ENCODE measurements at regions of chr3 and their contacts with region 1.

Region 1: GRCh38 chr3:50611464-50612233 is at the start of gene CISH:
- DNase-seq: no peak
- ATAC-seq: peak; percentile 88
- H3K4me3 ChIP-seq: peak within 1 kb of the TSS; percentile 85
- H3K27ac ChIP-seq: peak within 1 kb of the TSS; percentile 61
- H3K4me1 ChIP-seq: peaks cover 19% of the 10 kb centered on the region
- H3K27me3 ChIP-seq: no peaks in the 10 kb centered on the region
- CTCF ChIP-seq: peak; percentile 35 to 61 (median 52)
- EP300 ChIP-seq: no peak
- POLR2A ChIP-seq: peak; percentile 86
- RAD21 ChIP-seq: no peak
- polyA plus RNA-seq, gene CISH: 0.21 to 0.57 TPM

Region 2: DNA sequence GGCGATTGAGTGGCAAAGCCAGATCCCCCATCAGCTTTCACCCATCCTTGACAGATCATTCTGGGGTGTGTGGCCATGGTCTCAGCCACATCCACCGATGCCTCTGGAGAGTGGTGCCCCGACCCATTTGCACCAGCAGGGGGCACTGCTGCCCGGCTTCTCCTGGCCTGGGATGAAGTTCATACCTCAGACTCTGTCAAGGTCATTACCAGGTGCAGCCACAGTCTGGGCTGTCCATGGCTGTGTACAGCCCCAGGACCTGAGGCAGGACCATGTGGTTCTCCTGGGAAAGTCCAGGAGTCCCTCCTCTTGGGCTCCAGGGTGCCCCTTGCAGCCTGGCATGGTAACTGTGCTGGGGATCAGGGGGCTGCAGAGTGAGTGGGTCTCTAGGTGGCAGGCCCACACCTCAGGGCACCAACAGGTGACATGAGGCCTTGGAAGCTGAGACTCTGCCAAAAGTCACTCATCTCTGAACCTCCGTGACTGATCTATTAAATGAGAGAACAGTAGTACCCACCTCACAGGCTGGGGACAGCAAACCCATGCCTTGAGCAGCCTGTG is 175.5 kb before region 1 on chr3:
- CTCF ChIA-PET with region 1: no interaction called
- POLR2A ChIA-PET with region 1: no interaction called
- RAD21 ChIA-PET with region 1: no interaction called
- SMC1A ChIA-PET with region 1: no interaction called
- in situ Hi-C with region 1: no loop called
- intact Hi-C with region 1: loop called (anchors 1 kb)
- DNase-seq: no peak
- ATAC-seq: peak; percentile 94
- H3K4me3 ChIP-seq: no peak overlapping the region
- H3K27ac ChIP-seq: no peak overlapping the region
- H3K4me1 ChIP-seq: no peaks in the 10 kb centered on the region
- H3K27me3 ChIP-seq: no peaks in the 10 kb centered on the region; a peak in 2 of 4 replicates
- CTCF ChIP-seq: peak; percentile 62 to 84 (median 79)
- EP300 ChIP-seq: no peak
- POLR2A ChIP-seq: no peak
- RAD21 ChIP-seq: peak; percentile 64

Region 3: DNA sequence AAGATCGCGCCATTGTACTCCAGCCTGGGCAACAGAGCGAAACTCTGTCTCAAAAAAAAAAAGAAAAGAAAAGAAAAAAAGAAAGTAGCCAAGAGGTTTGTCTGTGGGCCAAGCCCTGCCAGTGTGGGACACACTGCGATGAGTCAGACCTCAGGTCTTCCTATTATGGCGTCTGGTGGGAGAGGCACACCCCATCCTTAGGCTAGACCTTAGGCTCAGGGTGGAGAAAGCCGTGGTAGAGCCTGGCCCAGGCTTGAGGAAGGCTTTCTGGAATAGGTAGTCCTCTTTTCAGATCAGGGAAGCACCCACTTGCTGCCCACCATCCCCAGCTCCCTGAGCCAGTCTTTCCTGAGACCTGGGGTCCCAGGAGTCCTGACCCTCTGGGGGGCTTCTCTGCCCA is 36.3 kb before region 1 on chr3:
- CTCF ChIA-PET with region 1: interaction called, 410 read pairs
- POLR2A ChIA-PET with region 1: interaction called, 23 read pairs
- RAD21 ChIA-PET with region 1: interaction called, 244 read pairs
- SMC1A ChIA-PET with region 1: interaction called, 137 read pairs
- in situ Hi-C with region 1: loop called (anchors 5 kb)
- intact Hi-C with region 1: loop called (anchors 1 kb)
- DNase-seq: no peak
- ATAC-seq: no peak
- H3K4me3 ChIP-seq: no peak overlapping the region
- H3K27ac ChIP-seq: no peak overlapping the region
- H3K4me1 ChIP-seq: peaks cover 4% of the 10 kb centered on the region
- H3K27me3 ChIP-seq: no peaks in the 10 kb centered on the region
- CTCF ChIP-seq: no peak
- EP300 ChIP-seq: no peak
- POLR2A ChIP-seq: no peak
- RAD21 ChIP-seq: no peak

Region 4: DNA sequence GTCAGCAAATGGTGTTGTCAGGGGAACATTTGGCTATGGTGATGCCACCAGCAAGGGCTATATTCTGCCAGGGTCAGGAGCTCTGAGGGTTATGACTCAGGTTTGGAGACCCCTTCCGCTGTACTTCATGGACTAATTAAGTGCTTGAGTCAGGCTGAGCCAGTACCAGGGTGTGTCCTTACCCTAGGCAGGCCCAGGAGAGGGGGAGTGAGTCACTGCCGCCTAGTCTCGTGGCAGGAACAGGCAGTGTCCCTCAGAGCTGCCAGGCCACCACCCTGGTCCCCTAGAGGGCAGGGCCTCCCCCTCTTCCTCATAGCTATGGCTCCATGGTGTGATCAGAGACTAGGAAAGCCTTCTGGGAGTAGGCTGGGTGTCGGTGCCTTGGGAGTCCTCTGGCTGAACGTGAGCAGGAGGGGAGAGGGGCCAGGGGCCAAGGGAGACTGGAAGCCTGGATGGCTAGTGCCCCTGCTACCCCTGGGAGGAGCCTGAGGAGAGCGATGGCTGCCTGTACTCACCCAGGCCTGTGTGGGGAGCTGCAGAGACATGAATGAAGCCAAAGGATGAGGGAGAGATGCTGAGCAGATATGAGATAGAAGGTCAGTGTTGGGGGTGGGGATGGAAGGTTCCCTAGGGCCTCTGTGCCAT is 15.9 kb after region 1 on chr3:
- CTCF ChIA-PET with region 1: interaction called, 35 read pairs
- POLR2A ChIA-PET with region 1: no interaction called
- RAD21 ChIA-PET with region 1: interaction called, 19 read pairs
- SMC1A ChIA-PET with region 1: interaction called, 26 read pairs
- in situ Hi-C with region 1: no loop called
- intact Hi-C with region 1: no loop called
- DNase-seq: no peak
- ATAC-seq: peak; percentile 55
- H3K4me3 ChIP-seq: no peak overlapping the region
- H3K27ac ChIP-seq: no peak overlapping the region
- H3K4me1 ChIP-seq: peaks cover 22% of the 10 kb centered on the region
- H3K27me3 ChIP-seq: no peaks in the 10 kb centered on the region
- CTCF ChIP-seq: peak; percentile 27 to 42 (median 37); a peak in 3 of 6 replicates
- EP300 ChIP-seq: no peak
- POLR2A ChIP-seq: no peak
- RAD21 ChIP-seq: peak; percentile 61

Region 5: DNA sequence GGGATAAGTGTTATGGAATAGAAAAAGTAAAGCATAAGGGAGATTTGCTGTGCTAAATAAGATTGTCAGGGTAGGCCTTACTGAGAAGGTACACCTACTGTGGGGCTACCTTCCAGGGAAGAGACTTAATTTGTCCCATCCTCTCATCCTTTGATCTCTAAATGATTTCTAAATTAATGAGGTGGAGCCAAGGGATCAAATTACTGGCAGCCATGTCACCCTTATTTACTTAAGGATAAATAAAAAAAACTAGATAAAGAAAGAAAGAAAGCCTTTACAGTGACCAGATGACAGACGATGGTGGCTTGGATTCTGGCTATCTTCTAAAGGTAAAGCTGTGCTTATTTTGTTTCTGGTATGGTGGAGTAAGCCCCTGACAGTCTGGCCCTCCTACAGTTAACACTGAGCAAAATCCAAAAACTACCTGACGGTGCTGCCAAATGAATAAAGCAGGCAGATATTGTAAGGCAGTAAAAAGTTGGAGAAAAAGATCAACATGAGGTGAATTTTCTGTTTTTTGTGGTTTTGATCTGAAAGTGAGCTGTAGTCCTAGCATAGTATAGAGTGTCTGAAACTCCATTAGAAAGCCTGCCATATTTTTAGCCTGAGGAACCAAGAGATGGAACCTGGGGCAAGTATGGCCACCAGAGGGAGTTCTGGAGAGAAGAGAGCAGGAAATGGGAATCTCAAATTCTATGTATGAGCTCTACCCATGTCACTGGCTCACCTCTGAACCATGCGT is 488.3 kb after region 1 on chr3:
- CTCF ChIA-PET with region 1: no interaction called
- POLR2A ChIA-PET with region 1: no interaction called
- RAD21 ChIA-PET with region 1: no interaction called
- SMC1A ChIA-PET with region 1: no interaction called
- in situ Hi-C with region 1: no loop called
- intact Hi-C with region 1: loop called (anchors 5 kb)
- DNase-seq: no peak
- ATAC-seq: peak; percentile 45
- H3K4me3 ChIP-seq: no peak overlapping the region
- H3K27ac ChIP-seq: no peak overlapping the region
- H3K4me1 ChIP-seq: no peaks in the 10 kb centered on the region
- H3K27me3 ChIP-seq: no peaks in the 10 kb centered on the region; a peak in 1 of 4 replicates
- CTCF ChIP-seq: peak; percentile 51 to 53 (median 52)
- EP300 ChIP-seq: no peak
- POLR2A ChIP-seq: no peak
- RAD21 ChIP-seq: peak; percentile 39

Region 6: GRCh38 chr3:51379301-51379700 is 767.7 kb after region 1 on chr3:
- CTCF ChIA-PET with region 1: interaction called, 17 read pairs
- POLR2A ChIA-PET with region 1: interaction called, 3 read pairs
- RAD21 ChIA-PET with region 1: no interaction called
- SMC1A ChIA-PET with region 1: interaction called, 3 read pairs
- in situ Hi-C with region 1: loop called (anchors 5 kb)
- intact Hi-C with region 1: loop called (anchors 2 kb)
- DNase-seq: no peak
- ATAC-seq: no peak
- H3K4me3 ChIP-seq: no peak overlapping the region
- H3K27ac ChIP-seq: no peak overlapping the region
- H3K4me1 ChIP-seq: peaks cover 9% of the 10 kb centered on the region
- H3K27me3 ChIP-seq: no peaks in the 10 kb centered on the region; a peak in 1 of 4 replicates
- CTCF ChIP-seq: no peak
- EP300 ChIP-seq: no peak
- POLR2A ChIP-seq: no peak
- RAD21 ChIP-seq: no peak

Region 7: GRCh38 chr3:51682079-51682478 is 1070.4 kb after region 1 on chr3:
- CTCF ChIA-PET with region 1: interaction called, 3 read pairs
- POLR2A ChIA-PET with region 1: no interaction called
- RAD21 ChIA-PET with region 1: no interaction called
- SMC1A ChIA-PET with region 1: no interaction called
- in situ Hi-C with region 1: loop called (anchors 25 kb)
- intact Hi-C with region 1: loop called (anchors 5 kb)
- DNase-seq: peak; percentile 81
- ATAC-seq: peak; percentile 89
- H3K4me3 ChIP-seq: no peak overlapping the region
- H3K27ac ChIP-seq: peak overlapping the region; percentile 51
- H3K4me1 ChIP-seq: peaks cover 38% of the 10 kb centered on the region
- H3K27me3 ChIP-seq: no peaks in the 10 kb centered on the region
- CTCF ChIP-seq: peak; percentile 90 to 99 (median 93); a peak in 5 of 6 replicates
- EP300 ChIP-seq: no peak
- POLR2A ChIP-seq: no peak
- RAD21 ChIP-seq: peak; percentile 93

Measured in GM12878 (cell line).